ENCODE measurements at regions of chr9 and their contacts with region 1.

Region 1: GRCh38 chr9:14322211-14323082 is 8.5 kb upstream of the NFIB start:
- DNase-seq: peak; percentile 76
- ATAC-seq: peak; percentile 93
- H3K4me3 ChIP-seq: peak overlapping the region; percentile 59
- H3K27ac ChIP-seq: peak overlapping the region; percentile 43; the same call in 1 of the 2 replicates
- H3K4me1 ChIP-seq: peaks cover 4% of the 10 kb centered on the region
- H3K27me3 ChIP-seq: peaks cover 40% of the 10 kb centered on the region
- CTCF ChIP-seq: peak; percentile 51
- POLR2A ChIP-seq: no peak
- RAD21 ChIP-seq: peak; percentile 60

Region 2: GRCh38 chr9:13358128-13358527 is 964.3 kb before region 1 on chr9:
- CTCF ChIA-PET with region 1: no interaction called
- POLR2A ChIA-PET with region 1: no interaction called
- dilution Hi-C with region 1: no loop called
- in situ Hi-C with region 1: no loop called
- intact Hi-C with region 1: loop called (anchors 5 kb)
- DNase-seq: peak; percentile 92
- ATAC-seq: peak; percentile 94
- H3K4me3 ChIP-seq: no peak overlapping the region
- H3K27ac ChIP-seq: no peak overlapping the region
- H3K4me1 ChIP-seq: peaks cover 3% of the 10 kb centered on the region; the same call in 1 of the 2 replicates
- H3K27me3 ChIP-seq: no peaks in the 10 kb centered on the region; the same call in 1 of the 2 replicates
- CTCF ChIP-seq: no peak
- POLR2A ChIP-seq: no peak
- RAD21 ChIP-seq: no peak

Region 3: GRCh38 chr9:13719981-13720676 is 602.3 kb before region 1 on chr9:
- CTCF ChIA-PET with region 1: no interaction called
- POLR2A ChIA-PET with region 1: no interaction called
- dilution Hi-C with region 1: no loop called
- in situ Hi-C with region 1: no loop called
- intact Hi-C with region 1: loop called (anchors 5 kb)
- DNase-seq: peak; percentile 84
- ATAC-seq: peak; percentile 79
- H3K4me3 ChIP-seq: no peak overlapping the region
- H3K27ac ChIP-seq: no peak overlapping the region; the same call in 1 of the 2 replicates
- H3K4me1 ChIP-seq: peaks cover 13% of the 10 kb centered on the region
- H3K27me3 ChIP-seq: no peaks in the 10 kb centered on the region
- CTCF ChIP-seq: no peak
- POLR2A ChIP-seq: no peak
- RAD21 ChIP-seq: no peak

Region 4: DNA sequence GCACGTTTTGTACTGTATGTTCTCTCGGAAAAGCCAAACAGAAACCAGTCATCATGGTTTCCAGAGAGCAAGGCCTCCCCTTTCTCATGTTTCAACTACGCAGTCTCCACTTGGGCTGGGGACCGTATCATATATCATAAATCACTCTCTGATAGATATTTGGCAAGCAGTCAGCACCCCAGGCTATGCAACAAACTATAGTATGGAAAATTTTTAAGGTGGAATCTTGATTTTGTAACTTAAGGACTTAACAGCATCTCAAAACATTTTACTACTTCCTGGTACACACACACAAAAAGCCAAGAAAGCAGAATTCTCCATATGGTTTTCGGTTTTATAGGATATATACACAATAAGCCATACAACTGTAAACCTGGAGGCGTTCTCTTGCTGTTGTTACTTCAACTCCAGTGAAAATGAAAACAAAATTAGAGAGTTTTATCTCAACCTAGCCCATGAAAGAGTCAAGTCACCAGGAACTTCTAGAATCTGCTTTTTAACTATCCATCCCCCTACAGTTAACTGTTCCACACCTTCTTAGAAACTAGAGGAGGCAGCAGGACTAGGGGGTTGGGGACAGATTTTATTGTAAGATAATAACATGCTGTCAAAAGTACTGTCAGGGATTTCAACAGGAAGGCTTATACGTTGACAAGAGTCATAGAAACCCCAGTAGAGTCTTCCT is 291.9 kb before region 1 on chr9:
- CTCF ChIA-PET with region 1: no interaction called
- POLR2A ChIA-PET with region 1: no interaction called
- dilution Hi-C with region 1: no loop called
- in situ Hi-C with region 1: no loop called
- intact Hi-C with region 1: loop called (anchors 5 kb)
- DNase-seq: peak; percentile 66
- ATAC-seq: peak; percentile 77
- H3K4me3 ChIP-seq: peak overlapping the region; percentile 30; the same call in 1 of the 2 replicates
- H3K27ac ChIP-seq: peak overlapping the region; percentile 5; the same call in 1 of the 2 replicates
- H3K4me1 ChIP-seq: no peaks in the 10 kb centered on the region
- H3K27me3 ChIP-seq: peaks cover 3% of the 10 kb centered on the region
- CTCF ChIP-seq: no peak
- POLR2A ChIP-seq: no peak
- RAD21 ChIP-seq: no peak

Region 5: GRCh38 chr9:14096258-14096922 is 226.1 kb before region 1 on chr9:
- CTCF ChIA-PET with region 1: no interaction called
- POLR2A ChIA-PET with region 1: no interaction called
- dilution Hi-C with region 1: no loop called
- in situ Hi-C with region 1: no loop called
- intact Hi-C with region 1: loop called (anchors 5 kb)
- DNase-seq: peak; percentile 62
- ATAC-seq: peak; percentile 21; the same call in 1 of the 2 replicates
- H3K4me3 ChIP-seq: no peak overlapping the region
- H3K27ac ChIP-seq: no peak overlapping the region
- H3K4me1 ChIP-seq: no peaks in the 10 kb centered on the region
- H3K27me3 ChIP-seq: peaks cover 5% of the 10 kb centered on the region
- CTCF ChIP-seq: no peak
- POLR2A ChIP-seq: no peak
- RAD21 ChIP-seq: no peak

Region 6: DNA sequence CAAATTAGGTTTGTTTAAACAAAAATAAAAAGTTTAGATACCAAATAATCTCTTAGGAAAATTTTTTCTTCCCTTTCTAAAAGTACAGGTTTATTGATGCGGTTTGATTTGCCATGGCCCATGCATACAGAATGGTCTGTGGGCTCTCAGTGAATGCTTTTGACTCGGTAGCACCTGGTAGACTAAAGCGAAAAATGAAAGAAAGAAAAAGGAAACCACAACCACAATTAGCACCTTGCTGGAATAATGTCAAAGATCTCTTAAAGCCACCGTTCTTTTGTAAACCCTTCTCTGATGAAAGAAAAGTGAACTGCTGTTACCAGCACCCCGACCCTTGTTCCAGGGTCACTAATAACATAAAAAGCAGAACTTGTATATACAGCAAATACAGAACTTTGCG is 166.4 kb before region 1 on chr9:
- CTCF ChIA-PET with region 1: no interaction called
- POLR2A ChIA-PET with region 1: no interaction called
- dilution Hi-C with region 1: no loop called
- in situ Hi-C with region 1: no loop called
- intact Hi-C with region 1: no loop called
- DNase-seq: no peak
- ATAC-seq: no peak
- H3K4me3 ChIP-seq: no peak overlapping the region
- H3K27ac ChIP-seq: no peak overlapping the region
- H3K4me1 ChIP-seq: no peaks in the 10 kb centered on the region
- H3K27me3 ChIP-seq: 0 out of 2 replicates have a peak, but pooled peaks cover 1% of the 10 kb centered on the region
- CTCF ChIP-seq: no peak
- POLR2A ChIP-seq: no peak
- RAD21 ChIP-seq: no peak

Region 7: DNA sequence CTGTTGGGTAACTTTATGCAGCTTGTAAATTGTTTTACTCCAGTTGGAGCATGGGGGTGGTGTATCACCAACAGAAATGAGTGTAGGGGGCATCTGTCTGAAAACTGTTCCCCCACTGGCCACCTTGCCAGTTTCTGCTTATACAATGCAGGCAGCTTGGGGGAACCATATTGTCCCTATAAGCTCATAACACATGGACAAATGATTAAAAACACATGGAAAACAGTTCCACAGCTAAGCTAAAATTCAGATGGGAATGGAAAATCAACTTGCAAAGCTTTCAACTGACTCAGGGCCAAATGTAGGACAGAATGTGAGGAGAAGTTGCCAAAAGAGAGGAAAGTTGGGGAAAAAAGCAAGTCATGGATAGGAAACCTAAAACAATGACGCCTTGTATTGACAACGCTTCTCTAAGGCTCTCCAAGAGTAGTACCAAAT is 408.0 kb after region 1 on chr9:
- CTCF ChIA-PET with region 1: no interaction called
- POLR2A ChIA-PET with region 1: no interaction called
- dilution Hi-C with region 1: no loop called
- in situ Hi-C with region 1: no loop called
- intact Hi-C with region 1: no loop called
- DNase-seq: no peak
- ATAC-seq: no peak
- H3K4me3 ChIP-seq: no peak overlapping the region
- H3K27ac ChIP-seq: no peak overlapping the region
- H3K4me1 ChIP-seq: no peaks in the 10 kb centered on the region
- H3K27me3 ChIP-seq: no peaks in the 10 kb centered on the region
- CTCF ChIP-seq: no peak
- POLR2A ChIP-seq: no peak
- RAD21 ChIP-seq: no peak